Psoas muscle (tissue), 8 donors: ENCODE measurements at regions of chr5 and their contacts with region 1.

Region 1: GRCh38 chr5:31511305-31511704 is 20.6 kb downstream of the DROSHA start:
- DNase-seq: no peak
- ATAC-seq: no peak
- H3K4me3 ChIP-seq: no peak overlapping the region
- H3K27ac ChIP-seq: no peak overlapping the region
- H3K4me1 ChIP-seq: no peaks in the 10 kb centered on the region
- H3K27me3 ChIP-seq: no peaks in the 10 kb centered on the region
- CTCF ChIP-seq: no peak

Region 2: GRCh38 chr5:31551878-31552277 is 40.6 kb after region 1 on chr5:
- intact Hi-C with region 1: loop called in 1 of 2 experiments (anchors 5 kb)
- DNase-seq: no peak
- ATAC-seq: no peak
- H3K4me3 ChIP-seq: no peak overlapping the region
- H3K27ac ChIP-seq: no peak overlapping the region
- H3K4me1 ChIP-seq: no peaks in the 10 kb centered on the region
- H3K27me3 ChIP-seq: no peaks in the 10 kb centered on the region
- CTCF ChIP-seq: no peak